Caco-2 (cell line): ENCODE measurements at regions of chr4 and their contacts with region 1.

Region 1: DNA sequence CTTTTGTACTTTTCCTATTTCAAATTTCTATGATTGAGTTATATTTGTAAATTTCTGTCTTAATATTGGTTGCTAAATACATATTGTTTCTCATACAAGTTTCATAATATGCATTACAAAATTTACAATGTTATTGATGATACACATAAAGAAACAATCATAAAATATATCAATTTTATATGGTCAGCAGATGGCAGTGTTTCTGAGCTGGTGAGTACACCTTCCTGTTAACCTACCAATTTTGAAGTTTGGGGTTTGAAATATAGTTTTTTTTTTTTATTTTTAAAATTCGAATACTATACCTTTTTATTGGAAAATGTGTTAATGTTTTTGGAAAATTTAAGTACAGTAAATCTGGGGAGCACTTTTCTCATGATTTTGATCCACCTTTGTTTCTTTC is 1953.1 kb upstream of the ADGRL3 start:
- DNase-seq: no peak
- H3K4me3 ChIP-seq: no peak overlapping the region
- H3K4me3 Mint-ChIP-seq: no peak overlapping the region
- H3K27ac Mint-ChIP-seq: no peak overlapping the region
- H3K4me1 ChIP-seq: no peaks in the 10 kb centered on the region
- H3K4me1 Mint-ChIP-seq: no peaks in the 10 kb centered on the region
- H3K27me3 ChIP-seq: no peaks in the 10 kb centered on the region
- H3K27me3 Mint-ChIP-seq: no peaks in the 10 kb centered on the region
- CTCF ChIP-seq: peak; percentile 11 to 14

Region 2: GRCh38 chr4:59200992-59201391 is 46.0 kb before region 1 on chr4:
- CTCF ChIA-PET with region 1: no interaction called
- POLR2A ChIA-PET with region 1: no interaction called
- intact Hi-C with region 1: no loop called
- DNase-seq: no peak
- H3K4me3 ChIP-seq: no peak overlapping the region
- H3K4me3 Mint-ChIP-seq: no peak overlapping the region
- H3K27ac Mint-ChIP-seq: no peak overlapping the region
- H3K4me1 ChIP-seq: no peaks in the 10 kb centered on the region
- H3K4me1 Mint-ChIP-seq: no peaks in the 10 kb centered on the region
- H3K27me3 ChIP-seq: no peaks in the 10 kb centered on the region
- H3K27me3 Mint-ChIP-seq: no peaks in the 10 kb centered on the region
- CTCF ChIP-seq: no peak

Region 3: DNA sequence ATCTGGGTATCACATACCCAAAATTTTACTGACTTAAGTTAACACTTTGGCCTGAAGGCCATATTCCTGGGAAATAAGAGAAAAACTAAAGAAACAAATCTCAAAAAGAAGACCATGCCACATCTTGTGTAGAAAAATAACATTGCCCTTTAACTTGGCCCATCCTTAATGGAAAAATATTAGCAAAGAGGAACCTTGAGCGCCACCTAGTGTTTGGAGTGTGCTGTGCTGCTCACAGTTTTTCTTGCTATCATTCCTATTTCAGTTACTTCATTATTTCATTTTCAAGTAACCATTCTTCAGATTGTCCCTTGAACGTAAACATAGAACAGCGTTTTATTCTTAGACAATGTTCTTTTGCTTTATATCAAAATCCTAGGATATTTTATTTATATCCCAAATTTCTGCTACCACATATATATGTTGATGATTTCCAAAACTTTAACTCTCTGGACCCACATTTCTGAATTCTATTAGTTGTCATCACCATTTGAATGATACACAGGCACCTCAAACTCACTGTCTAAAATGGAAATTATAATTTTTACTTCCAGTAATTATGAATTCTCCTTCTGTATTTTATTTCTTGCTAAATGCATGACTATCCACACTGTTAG is 954.1 kb after region 1 on chr4:
- CTCF ChIA-PET with region 1: no interaction called
- POLR2A ChIA-PET with region 1: no interaction called
- intact Hi-C with region 1: loop called (anchors 1 kb)
- DNase-seq: peak; percentile 38 to 64
- H3K4me3 ChIP-seq: no peak overlapping the region
- H3K4me3 Mint-ChIP-seq: no peak overlapping the region
- H3K27ac Mint-ChIP-seq: no peak overlapping the region
- H3K4me1 ChIP-seq: no peaks in the 10 kb centered on the region
- H3K4me1 Mint-ChIP-seq: no peaks in the 10 kb centered on the region
- H3K27me3 ChIP-seq: no peaks in the 10 kb centered on the region
- H3K27me3 Mint-ChIP-seq: no peaks in the 10 kb centered on the region
- CTCF ChIP-seq: peak; percentile 74 to 78